ENCODE measurements at regions of chr7 and their contacts with region 1.

Region 1: DNA sequence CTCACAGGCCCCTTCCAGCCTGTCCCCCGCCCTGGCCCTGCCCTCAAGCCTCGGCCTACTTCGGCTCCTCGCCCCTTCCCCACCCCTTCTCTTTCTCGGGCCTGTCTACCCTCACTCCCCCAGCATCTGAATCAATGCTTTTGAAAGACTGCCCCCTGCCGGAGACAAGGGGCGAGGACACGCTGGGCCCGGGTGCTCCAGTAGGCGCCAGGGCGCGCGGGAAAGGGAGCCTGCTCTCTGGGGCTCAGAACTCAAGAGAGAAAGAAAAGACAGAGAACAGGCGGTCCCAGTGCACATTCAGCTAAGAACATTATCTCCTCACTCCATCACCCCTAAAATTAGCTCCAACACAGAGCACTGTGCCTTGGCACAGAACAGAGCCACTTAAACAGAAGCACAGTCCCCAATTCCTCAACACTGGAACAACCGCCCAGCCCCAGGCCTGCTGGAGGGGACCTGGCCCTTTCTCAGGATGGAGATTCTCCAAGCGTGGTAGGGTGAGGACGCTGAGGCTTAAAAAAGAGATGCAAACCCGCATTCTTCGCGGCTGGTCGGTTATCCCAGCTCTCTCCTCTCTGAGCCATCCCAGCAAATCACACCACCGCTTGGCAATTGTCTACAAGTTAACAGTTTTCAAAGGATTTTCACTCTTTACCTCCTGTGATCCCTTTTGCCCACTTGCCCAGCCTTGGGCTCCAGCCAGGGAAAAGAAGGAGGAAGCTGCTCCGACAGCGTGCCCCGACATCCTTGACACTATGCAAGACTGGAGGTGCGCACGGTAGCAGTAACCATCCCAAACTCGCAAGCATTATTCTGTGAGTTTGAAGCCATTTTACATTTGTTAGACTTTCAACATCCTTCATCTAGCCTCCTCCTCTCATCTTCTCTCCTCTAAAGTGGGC is 2.1 kb downstream of the GIGYF1 start:
- DNase-seq: peak; percentile 91
- ATAC-seq: peak; percentile 84

Region 2: DNA sequence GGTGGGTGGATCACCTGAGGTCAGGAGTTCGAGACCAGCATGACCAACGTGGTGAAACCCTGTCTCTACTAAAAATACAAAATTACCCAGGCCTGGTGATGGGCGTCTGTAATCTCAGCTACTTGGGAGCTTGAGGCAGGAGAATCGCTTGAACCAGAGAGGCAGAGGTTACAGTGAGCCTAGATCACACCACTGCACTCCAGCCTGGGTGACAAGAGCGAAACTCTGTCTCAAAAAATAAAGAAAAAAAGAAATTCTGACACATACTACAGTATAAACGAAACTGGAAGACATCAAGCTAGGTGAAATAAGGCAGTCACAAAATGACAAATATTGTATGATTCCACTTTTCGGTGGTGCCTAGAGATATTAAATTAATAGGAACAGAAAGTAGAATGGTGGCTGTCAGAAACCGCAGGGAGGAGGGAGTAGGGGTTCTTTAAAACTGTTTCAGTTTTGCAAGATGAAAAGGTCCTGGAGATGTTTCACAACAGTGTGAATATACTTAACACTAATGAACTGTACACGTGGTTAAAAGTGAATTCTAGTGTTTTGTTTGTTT is 295.4 kb before region 1 on chr7:
- intact Hi-C with region 1: no loop called
- DNase-seq: no peak
- ATAC-seq: no peak

Region 3: GRCh38 chr7:100469227-100470044 is 222.5 kb before region 1 on chr7:
- intact Hi-C with region 1: loop called (anchors 5 kb)
- DNase-seq: peak; percentile 93
- ATAC-seq: peak; percentile 73

Region 4: DNA sequence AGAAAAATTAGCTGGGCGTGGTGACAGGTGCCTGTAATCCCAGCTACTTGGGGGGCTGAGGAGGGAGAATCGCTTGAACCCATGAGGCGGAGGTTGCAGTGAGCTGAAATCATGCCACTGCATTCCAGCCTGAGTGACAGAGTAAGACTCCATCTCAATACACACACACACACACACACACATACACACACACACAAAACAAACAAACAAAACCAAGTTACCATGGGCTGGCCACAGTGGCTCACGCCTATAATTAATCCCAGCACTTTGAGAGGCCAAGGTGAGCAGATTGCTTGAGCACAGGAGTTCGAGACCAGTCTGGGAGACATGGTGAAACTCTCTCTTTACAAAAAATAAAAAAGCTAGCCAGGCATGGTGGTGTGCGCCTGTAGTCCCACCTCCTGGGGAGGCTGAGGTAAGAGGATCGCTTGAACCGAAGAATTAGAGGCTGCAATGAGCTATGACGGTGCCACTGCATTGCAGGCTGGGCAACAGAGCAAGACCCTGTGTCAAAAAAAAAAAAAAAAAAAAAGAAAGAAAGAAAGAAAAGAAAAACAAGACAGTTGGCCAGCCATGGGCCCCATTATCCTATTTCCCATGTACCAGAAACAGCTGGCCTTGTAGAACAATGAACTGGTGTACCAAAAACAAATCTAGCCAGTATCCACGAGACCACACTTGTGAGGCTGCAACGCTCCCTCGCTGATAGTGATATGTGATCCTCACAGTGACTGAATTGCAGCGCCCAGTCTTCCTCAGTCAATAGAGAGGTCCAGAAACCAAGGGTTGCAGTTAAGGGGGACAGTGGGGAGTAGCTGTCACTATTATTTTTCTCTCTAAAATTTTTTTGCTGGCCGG is 159.5 kb before region 1 on chr7:
- intact Hi-C with region 1: no loop called
- DNase-seq: no peak
- ATAC-seq: no peak

Region 5: GRCh38 chr7:100563809-100564400 is 128.0 kb before region 1 on chr7:
- intact Hi-C with region 1: loop called (anchors 5 kb)
- DNase-seq: peak; percentile 90
- ATAC-seq: peak; percentile 58

Region 6: GRCh38 chr7:100586266-100587025 is 105.5 kb before region 1 on chr7 and contains the start of gene FBXO24:
- intact Hi-C with region 1: loop called (anchors 5 kb)
- DNase-seq: peak; percentile 100
- ATAC-seq: peak; percentile 93
- total RNA-seq, gene FBXO24: 0.41 TPM

Region 7: DNA sequence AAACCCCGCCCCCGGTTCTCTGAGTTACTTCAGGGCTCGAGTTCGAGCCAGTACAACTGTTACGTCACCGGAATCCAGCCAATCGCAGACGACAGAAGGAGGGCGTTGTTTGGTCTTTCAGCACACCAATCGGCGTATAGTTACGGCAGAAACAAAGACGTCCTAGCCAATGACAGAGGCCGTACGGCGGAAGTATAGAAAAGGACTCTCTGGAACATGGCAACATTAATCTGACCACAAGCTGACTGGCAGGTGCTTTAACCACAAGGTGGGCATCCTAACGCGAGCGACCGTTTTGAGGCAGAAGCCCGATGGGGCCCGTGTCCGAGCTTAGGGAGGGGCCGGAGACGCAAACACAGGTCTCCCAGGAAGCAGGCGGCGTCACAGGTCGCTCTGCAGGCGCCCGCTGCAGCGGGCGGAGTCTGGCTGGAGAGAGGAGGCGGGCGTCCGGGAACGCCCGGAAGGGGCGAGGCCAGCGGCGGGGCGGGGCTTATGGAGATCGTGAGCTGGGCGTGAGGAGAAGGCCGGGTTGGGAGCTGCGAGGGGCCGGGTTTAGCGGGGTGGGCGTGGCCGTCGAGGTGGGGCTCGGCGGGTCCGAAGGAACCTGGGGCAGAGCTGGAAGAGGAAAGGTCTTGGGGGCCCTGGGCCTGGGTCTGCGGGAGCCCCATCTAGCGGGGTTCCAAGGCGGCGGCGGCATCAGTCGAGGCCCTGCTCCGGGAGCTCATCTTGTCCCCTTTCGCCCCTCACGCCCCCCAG is 79.8 kb before region 1 on chr7 and contains the start of gene MOSPD3:
- intact Hi-C with region 1: loop called (anchors 5 kb)
- DNase-seq: peak; percentile 98
- ATAC-seq: peak; percentile 97
- total RNA-seq, gene MOSPD3: 9.3 TPM

Region 8: GRCh38 chr7:100632951-100633717 is 58.8 kb before region 1 on chr7:
- intact Hi-C with region 1: loop called (anchors 1 kb)
- DNase-seq: peak; percentile 70
- ATAC-seq: peak; percentile 51

Region 9: GRCh38 chr7:100673300-100673941 is 18.5 kb before region 1 on chr7 and contains the start of gene GNB2:
- intact Hi-C with region 1: loop called (anchors 2 kb)
- DNase-seq: peak; percentile 100
- ATAC-seq: peak; percentile 93
- total RNA-seq, gene GNB2: 120 TPM

Region 10: DNA sequence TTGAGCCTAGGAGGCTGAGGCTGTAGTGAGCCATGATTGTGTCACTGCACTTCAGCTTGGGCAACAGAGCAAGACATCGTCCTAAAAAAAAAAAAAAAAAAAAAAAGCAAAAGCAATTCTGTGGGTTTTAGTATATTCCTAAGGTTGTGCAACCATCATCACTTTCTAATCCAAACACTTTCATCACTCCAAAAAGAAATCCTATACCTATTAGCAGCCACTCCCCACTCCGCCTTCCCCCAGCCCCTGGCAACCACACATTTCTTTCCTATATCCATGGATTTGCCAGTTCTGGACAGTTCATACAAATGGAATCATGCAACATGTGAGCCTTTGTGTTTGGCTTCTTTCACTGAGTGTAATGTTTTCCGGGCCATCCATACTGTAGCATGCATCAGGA is 61.8 kb after region 1 on chr7:
- intact Hi-C with region 1: no loop called
- DNase-seq: no peak
- ATAC-seq: no peak